OCI-LY7 (cell line): ENCODE measurements at regions of chr1 and their contacts with region 1.

Region 1: DNA sequence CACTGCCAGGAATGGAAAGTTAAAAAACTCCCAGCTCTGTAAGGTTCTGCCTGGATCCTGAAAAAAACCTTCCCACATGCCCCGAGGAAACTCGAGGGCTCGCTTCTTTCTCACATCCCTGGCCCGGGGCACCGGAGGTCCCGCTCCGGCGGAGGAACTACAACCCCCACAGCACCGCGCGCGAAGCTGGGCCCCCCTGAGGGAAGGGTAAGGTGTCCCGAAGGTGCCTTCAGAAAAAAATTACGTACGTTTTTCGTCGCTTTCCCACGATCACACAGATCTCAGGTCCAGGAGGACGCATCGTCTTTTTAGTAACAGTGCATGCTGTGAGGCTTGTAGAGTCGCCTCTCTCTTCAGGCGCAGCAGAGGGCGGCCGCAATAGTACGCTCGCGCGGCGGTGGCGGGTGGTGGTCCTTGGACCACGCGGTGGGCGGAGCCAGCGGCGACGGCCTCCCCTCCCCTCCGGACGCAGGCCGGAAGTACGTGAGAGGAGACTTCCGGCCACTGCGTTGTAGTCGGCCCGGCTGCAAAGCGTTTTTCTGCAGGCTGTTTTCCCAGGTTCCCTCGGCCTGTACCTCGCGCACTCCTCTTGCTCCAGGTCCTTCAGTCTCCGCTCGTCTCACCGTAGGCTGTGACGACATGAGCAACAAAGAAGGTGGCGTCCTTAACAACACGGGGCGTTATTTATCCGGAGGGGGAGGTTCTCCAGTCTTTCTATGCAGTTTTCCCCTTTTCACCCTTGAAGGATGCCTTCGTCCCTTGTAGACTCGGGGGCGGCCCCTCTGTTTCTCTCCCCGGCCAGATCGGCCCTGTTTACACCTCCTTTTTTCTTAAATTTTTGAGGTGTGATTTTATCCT is at the start of gene TSNAX:
- DNase-seq: peak; percentile 96
- H3K4me3 ChIP-seq: peak within 1 kb of the TSS; percentile 88
- H3K27ac ChIP-seq: peak within 1 kb of the TSS; percentile 69
- H3K4me1 ChIP-seq: peaks cover 21% of the 10 kb centered on the region
- CTCF ChIP-seq: no peak
- total RNA-seq, gene TSNAX: 17.4 and 17.8 TPM in 2 replicates

Region 2: DNA sequence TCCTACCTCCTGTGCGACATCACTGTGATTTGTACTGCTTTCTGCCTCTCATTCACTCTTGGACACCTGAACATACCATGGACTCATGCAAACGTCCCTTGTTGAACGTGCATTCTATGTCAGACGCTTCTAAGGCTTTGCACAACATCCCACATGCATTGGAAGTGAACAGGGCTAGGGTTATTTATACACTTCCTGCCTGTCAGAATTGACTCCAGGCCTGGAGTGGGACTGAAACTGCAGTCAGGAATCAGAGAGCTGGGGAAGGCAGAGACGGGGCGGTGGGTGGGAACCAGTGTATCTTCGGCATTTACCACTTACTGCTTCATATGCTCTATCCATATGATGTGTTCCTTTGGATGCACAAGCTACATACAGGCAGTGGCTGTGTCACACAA is 1542.8 kb before region 1 on chr1:
- CTCF ChIA-PET with region 1: interaction called, 12 read pairs
- POLR2A ChIA-PET with region 1: no interaction called
- intact Hi-C with region 1: no loop called
- DNase-seq: no peak
- H3K4me3 ChIP-seq: no peak overlapping the region
- H3K27ac ChIP-seq: no peak overlapping the region
- H3K4me1 ChIP-seq: peaks cover 12% of the 10 kb centered on the region
- CTCF ChIP-seq: no peak

Region 3: GRCh38 chr1:230642263-230642959 is 886.0 kb before region 1 on chr1 and contains the start of gene COG2:
- CTCF ChIA-PET with region 1: no interaction called
- POLR2A ChIA-PET with region 1: no interaction called
- intact Hi-C with region 1: loop called (anchors 5 kb)
- DNase-seq: peak; percentile 95
- H3K4me3 ChIP-seq: peak within 1 kb of the TSS; percentile 82
- H3K27ac ChIP-seq: peak within 1 kb of the TSS; percentile 41
- H3K4me1 ChIP-seq: peaks cover 18% of the 10 kb centered on the region
- CTCF ChIP-seq: peak; percentile 89
- total RNA-seq, gene COG2: 30.5 and 47.9 TPM in 2 replicates

Region 4: GRCh38 chr1:231357831-231358354 is 170.5 kb before region 1 on chr1:
- CTCF ChIA-PET with region 1: no interaction called
- POLR2A ChIA-PET with region 1: no interaction called
- intact Hi-C with region 1: loop called (anchors 5 kb)
- DNase-seq: peak; percentile 74
- H3K4me3 ChIP-seq: no peak overlapping the region
- H3K27ac ChIP-seq: no peak overlapping the region
- H3K4me1 ChIP-seq: no peaks in the 10 kb centered on the region
- CTCF ChIP-seq: peak; percentile 96

Region 5: DNA sequence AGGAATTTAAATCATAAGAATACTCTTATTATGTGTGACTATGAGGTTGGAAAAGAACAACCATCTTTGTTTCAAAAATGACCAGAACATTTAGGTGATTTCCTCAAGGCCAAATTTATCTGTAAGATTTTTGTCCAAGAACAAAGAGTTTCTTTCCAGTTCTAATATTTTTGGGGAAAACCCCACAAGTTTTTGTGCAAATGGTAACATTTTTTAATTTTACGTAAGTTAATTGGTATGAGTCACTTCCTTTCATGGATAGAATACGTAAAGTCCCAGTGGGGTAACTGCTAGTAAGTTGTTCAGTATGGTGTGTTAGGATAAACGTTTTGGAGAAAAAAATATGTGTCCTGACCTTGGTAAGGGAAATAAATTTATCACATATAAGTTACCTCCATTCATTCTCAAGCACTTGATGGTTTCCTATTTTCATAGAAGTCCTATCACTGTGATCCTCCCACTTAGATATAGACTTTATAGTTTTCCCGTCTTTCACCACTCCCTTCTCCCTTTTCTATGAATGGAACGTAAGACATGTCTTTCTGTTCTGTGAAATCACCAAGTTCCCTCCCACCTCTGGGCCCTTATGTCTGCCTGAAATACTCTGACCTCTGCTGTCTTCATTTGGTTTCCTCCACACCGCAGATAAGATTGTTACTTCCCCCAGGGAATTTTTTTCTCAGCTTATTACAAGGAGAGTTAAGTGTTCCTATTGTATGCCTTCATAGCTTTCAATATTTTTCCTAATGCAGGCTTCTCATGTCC is 34.8 kb before region 1 on chr1:
- CTCF ChIA-PET with region 1: no interaction called
- POLR2A ChIA-PET with region 1: no interaction called
- intact Hi-C with region 1: no loop called
- DNase-seq: no peak
- H3K4me3 ChIP-seq: no peak overlapping the region
- H3K27ac ChIP-seq: no peak overlapping the region
- H3K4me1 ChIP-seq: no peaks in the 10 kb centered on the region
- CTCF ChIP-seq: no peak

Region 6: DNA sequence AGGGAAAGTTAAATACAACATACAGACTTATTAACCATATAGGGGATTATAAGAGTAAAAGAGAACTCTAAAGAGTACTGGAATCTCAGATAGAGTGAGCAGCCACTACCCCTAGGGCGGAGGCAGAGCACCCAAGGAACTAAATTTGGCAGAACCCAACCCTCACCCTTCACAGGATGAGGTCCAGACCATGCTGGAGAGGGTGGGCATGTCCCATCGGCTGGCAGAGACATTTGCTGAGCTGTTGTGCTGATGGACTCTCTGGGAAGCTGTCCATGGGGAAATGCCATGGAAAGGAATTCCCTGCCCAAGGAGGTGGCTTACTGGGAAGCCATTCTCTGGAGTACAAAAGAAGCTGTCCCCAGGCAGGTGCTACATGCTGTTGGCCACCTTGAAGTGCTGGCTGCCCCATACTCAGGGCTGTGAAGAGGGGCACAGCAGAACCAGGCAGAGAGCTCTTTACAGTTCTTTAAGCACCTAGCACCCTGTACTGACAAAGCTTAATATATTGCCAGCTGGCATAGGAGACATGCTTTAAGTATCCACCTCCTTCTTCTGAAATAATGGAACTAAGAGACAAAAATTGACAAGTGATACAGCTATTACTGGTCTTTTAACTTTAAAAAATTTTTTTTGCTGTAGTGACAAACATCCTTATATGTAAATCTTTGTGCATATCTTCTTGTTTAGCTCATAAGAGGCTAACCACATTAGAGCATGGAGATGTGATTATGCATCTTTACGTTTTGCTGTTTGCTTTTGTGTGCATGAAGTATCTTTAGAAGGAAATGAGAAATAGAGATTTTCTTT is 29.7 kb after region 1 on chr1:
- CTCF ChIA-PET with region 1: no interaction called
- POLR2A ChIA-PET with region 1: no interaction called
- intact Hi-C with region 1: no loop called
- DNase-seq: no peak
- H3K4me3 ChIP-seq: no peak overlapping the region
- H3K27ac ChIP-seq: no peak overlapping the region
- H3K4me1 ChIP-seq: no peaks in the 10 kb centered on the region
- CTCF ChIP-seq: no peak

Region 7: GRCh38 chr1:231643071-231643934 is 114.9 kb after region 1 on chr1:
- CTCF ChIA-PET with region 1: no interaction called
- POLR2A ChIA-PET with region 1: no interaction called
- intact Hi-C with region 1: no loop called
- DNase-seq: no peak
- H3K4me3 ChIP-seq: no peak overlapping the region
- H3K27ac ChIP-seq: no peak overlapping the region
- H3K4me1 ChIP-seq: no peaks in the 10 kb centered on the region
- CTCF ChIP-seq: no peak

Region 8: DNA sequence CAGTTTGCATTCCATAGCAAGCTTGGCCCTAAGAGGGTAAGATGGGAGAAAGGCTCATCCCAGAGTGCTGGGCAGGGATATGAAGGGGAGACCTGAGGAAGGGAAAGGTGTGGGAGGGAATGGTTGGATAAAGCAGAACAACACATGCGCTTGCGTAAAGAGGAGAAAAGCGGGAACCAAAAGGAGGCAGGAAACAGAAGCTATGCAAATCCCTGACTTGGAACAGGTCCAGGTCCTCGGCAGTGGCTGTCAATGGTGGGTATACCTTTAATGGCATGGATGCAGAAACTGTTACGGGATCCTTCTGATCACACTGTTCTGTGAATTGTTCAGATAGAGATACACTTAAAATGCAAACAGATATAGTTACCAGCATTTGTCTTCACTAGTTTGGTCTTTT is 645.9 kb after region 1 on chr1:
- CTCF ChIA-PET with region 1: no interaction called
- POLR2A ChIA-PET with region 1: no interaction called
- intact Hi-C with region 1: no loop called
- DNase-seq: no peak
- H3K4me3 ChIP-seq: no peak overlapping the region
- H3K27ac ChIP-seq: no peak overlapping the region
- H3K4me1 ChIP-seq: no peaks in the 10 kb centered on the region
- CTCF ChIP-seq: no peak